PC-9 (cell line): ENCODE measurements at regions of chr10 and their contacts with region 1.

Region 1: GRCh38 chr10:80126876-80127275 is 5.7 kb upstream of the PLAC9 start:
- DNase-seq: no peak
- H3K4me3 ChIP-seq: no peak overlapping the region
- H3K27ac ChIP-seq: no peak overlapping the region
- H3K4me1 ChIP-seq: peaks cover 11% of the 10 kb centered on the region; the same call in 1 of the 2 replicates
- H3K27me3 ChIP-seq: no peaks in the 10 kb centered on the region
- CTCF ChIP-seq: no peak

Region 2: GRCh38 chr10:79579361-79579760 is 547.5 kb before region 1 on chr10:
- CTCF ChIA-PET with region 1: interaction called, 14 read pairs
- POLR2A ChIA-PET with region 1: no interaction called
- intact Hi-C with region 1: no loop called
- DNase-seq: no peak
- H3K4me3 ChIP-seq: no peak overlapping the region
- H3K27ac ChIP-seq: no peak overlapping the region
- H3K4me1 ChIP-seq: no peaks in the 10 kb centered on the region
- H3K27me3 ChIP-seq: peaks cover 34% of the 10 kb centered on the region
- CTCF ChIP-seq: no peak

Region 3: DNA sequence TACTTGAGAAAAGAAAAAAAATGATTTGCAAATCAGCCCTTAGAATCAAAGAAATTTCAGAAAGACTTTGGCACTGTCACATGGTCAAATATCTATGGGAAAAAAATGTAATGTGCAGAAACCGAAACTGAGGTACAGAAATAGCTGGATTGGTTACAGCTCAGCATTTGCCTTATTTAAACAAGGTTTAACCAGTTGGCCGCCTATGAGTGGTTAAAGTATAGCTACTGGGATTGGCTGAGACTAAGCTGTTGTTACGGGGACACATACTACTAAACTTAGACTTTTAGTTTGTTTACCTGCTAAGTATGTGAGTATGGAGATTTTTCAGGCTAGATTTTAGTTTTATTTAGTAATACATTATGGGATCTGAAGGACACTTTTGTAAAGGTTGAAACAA is 216.5 kb before region 1 on chr10:
- CTCF ChIA-PET with region 1: no interaction called
- POLR2A ChIA-PET with region 1: no interaction called
- intact Hi-C with region 1: loop called (anchors 10 kb)
- DNase-seq: no peak
- H3K4me3 ChIP-seq: no peak overlapping the region
- H3K27ac ChIP-seq: no peak overlapping the region
- H3K4me1 ChIP-seq: peaks cover 2% of the 10 kb centered on the region; the same call in 1 of the 2 replicates
- H3K27me3 ChIP-seq: 0 out of 2 replicates have a peak, but pooled peaks cover 1% of the 10 kb centered on the region
- CTCF ChIP-seq: no peak

Region 4: GRCh38 chr10:80032503-80032902 is 94.4 kb before region 1 on chr10:
- CTCF ChIA-PET with region 1: no interaction called
- POLR2A ChIA-PET with region 1: no interaction called
- intact Hi-C with region 1: no loop called
- DNase-seq: no peak
- H3K4me3 ChIP-seq: no peak overlapping the region
- H3K27ac ChIP-seq: no peak overlapping the region
- H3K4me1 ChIP-seq: 0 out of 2 replicates have a peak, but pooled peaks cover 7% of the 10 kb centered on the region
- H3K27me3 ChIP-seq: no peaks in the 10 kb centered on the region
- CTCF ChIP-seq: no peak